Caco-2 (cell line): ENCODE measurements at regions of chr3 and their contacts with region 1.

Region 1: GRCh38 chr3:169966428-169966950 is at the start of gene SEC62:
- DNase-seq: peak; percentile 93 to 95
- H3K4me3 ChIP-seq: peak within 1 kb of the TSS; percentile 48
- H3K4me3 Mint-ChIP-seq: peak within 1 kb of the TSS; percentile 97
- H3K27ac Mint-ChIP-seq: peak within 1 kb of the TSS; percentile 99
- H3K4me1 ChIP-seq: peaks cover 7% of the 10 kb centered on the region
- H3K4me1 Mint-ChIP-seq: peaks cover 14% of the 10 kb centered on the region
- H3K27me3 ChIP-seq: no peaks in the 10 kb centered on the region
- H3K27me3 Mint-ChIP-seq: peaks cover 13% of the 10 kb centered on the region
- CTCF ChIP-seq: peak; percentile 19 to 62
- total RNA-seq, gene SEC62: 60.3 and 74.7 TPM in 2 replicates

Region 2: DNA sequence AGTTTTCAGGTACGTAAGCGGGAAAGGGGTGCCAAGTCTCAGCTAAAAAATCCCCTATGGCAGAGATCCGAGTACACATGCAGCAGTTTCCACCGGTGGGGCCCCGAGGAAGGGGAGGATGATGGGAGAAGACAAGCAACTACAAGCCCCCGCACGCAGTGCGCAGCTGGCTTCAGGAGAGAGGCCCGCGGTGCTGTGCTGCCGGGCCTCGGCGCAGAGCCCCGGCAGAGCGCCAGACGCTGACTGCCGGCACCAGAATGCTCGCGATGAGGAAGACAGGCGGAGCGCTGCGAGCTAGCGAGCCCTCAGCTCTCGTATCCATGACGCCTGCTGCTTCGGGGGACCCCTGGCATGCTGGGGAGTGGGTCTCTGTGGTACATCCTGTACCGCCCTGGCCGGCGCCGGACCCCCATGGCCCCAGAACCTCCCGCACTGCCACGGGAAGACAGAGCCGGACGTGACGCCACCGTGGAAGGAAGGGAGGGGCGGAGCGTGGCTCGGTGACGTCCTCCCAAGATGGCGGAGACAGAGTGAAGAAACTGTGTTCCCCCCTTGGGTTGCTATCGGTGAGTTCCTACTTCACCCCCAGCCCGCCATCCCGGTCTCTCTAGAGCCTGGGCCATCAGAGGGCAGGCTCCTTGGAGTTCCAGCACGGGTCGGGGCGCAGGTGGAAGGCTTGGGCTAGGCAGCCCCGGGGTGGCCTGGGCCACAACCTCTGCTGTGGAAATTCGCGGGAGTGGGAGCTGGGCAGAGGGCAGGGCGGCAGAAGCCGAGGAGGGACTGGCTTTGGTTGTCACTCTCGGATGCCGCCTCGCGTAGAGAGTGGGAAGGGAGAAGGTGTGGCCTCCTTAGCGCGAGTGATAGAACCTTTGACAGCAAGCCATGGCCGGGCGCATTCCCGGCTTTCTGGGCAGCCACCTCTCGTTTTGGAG is 193.3 kb before region 1 on chr3 and contains the start of gene MYNN:
- CTCF ChIA-PET with region 1: no interaction called
- POLR2A ChIA-PET with region 1: no interaction called
- intact Hi-C with region 1: loop called (anchors 2 kb)
- DNase-seq: peak; percentile 89 to 92
- H3K4me3 ChIP-seq: peak within 1 kb of the TSS; percentile 90
- H3K4me3 Mint-ChIP-seq: peak within 1 kb of the TSS; percentile 94
- H3K27ac Mint-ChIP-seq: peak within 1 kb of the TSS; percentile 98
- H3K4me1 ChIP-seq: no peaks in the 10 kb centered on the region
- H3K4me1 Mint-ChIP-seq: peaks cover 5% of the 10 kb centered on the region
- H3K27me3 ChIP-seq: no peaks in the 10 kb centered on the region
- H3K27me3 Mint-ChIP-seq: no peaks in the 10 kb centered on the region
- CTCF ChIP-seq: peak in 1 of 2 experiments; percentile 24
- total RNA-seq, gene MYNN: 9.8 and 10.6 TPM in 2 replicates

Region 3: DNA sequence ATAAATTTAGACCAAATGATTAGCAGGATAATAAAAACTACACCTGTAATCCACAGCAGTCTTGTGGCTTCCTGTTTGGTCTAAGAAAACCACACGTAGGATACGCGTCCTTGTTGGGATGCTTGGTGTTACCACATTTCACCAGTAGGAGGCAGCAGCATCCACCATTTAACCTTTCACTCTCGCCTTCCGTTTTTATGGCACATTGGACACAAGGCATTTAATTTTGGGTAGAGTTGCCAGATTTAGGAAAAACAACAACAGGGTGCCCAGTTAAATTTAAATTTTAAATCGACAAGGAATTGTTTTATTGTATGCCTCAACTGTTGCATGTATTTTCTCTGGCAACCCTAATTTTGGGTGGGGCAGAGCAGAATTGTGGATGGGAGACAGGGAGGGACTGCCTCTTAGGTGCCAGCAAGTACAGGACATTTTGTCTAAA is 103.0 kb before region 1 on chr3:
- CTCF ChIA-PET with region 1: no interaction called
- POLR2A ChIA-PET with region 1: no interaction called
- intact Hi-C with region 1: loop called (anchors 1 kb)
- DNase-seq: peak; percentile 57 to 71
- H3K4me3 ChIP-seq: no peak overlapping the region
- H3K4me3 Mint-ChIP-seq: no peak overlapping the region
- H3K27ac Mint-ChIP-seq: no peak overlapping the region
- H3K4me1 ChIP-seq: no peaks in the 10 kb centered on the region
- H3K4me1 Mint-ChIP-seq: no peaks in the 10 kb centered on the region
- H3K27me3 ChIP-seq: no peaks in the 10 kb centered on the region
- H3K27me3 Mint-ChIP-seq: no peaks in the 10 kb centered on the region
- CTCF ChIP-seq: peak; percentile 70 to 82

Region 4: DNA sequence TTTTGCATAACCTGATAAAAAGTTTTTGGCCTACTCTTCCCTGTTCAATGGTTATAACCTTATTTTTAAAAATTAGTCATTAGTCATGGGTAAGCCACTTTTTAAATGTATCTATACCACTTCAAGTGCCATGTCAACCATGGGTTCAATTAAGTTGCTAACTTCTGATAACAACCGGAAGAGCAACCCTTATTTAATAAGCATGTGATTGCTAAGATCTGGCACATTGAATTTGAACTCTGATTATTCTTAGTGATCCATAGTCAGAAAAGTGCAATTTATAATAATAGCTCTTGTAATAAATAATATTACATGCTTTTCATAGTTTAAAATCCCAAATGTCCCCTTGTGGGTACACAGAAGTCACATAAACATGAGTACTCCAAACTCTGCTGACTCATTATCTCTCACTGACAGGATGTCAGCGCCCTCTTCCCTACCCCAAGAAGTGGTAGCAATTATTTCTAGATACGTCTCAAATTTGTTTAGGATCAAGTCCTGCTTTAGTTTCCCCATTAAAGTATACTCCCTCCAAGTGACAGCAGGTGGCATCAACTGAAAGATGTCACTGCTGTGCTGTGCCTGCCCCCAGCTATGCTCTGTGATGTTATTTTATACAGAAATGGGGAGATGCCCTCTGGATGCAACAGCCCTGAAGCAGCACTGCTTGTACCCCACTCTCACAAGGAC is 36.5 kb before region 1 on chr3:
- CTCF ChIA-PET with region 1: no interaction called
- POLR2A ChIA-PET with region 1: no interaction called
- intact Hi-C with region 1: loop called (anchors 1 kb)
- DNase-seq: no peak
- H3K4me3 ChIP-seq: no peak overlapping the region
- H3K4me3 Mint-ChIP-seq: no peak overlapping the region
- H3K27ac Mint-ChIP-seq: no peak overlapping the region
- H3K4me1 ChIP-seq: no peaks in the 10 kb centered on the region
- H3K4me1 Mint-ChIP-seq: no peaks in the 10 kb centered on the region
- H3K27me3 ChIP-seq: no peaks in the 10 kb centered on the region
- H3K27me3 Mint-ChIP-seq: peaks cover 15% of the 10 kb centered on the region
- CTCF ChIP-seq: no peak

Region 5: GRCh38 chr3:170037463-170038433 is 71.3 kb after region 1 on chr3 and contains the start of gene GPR160:
- CTCF ChIA-PET with region 1: no interaction called
- POLR2A ChIA-PET with region 1: no interaction called
- intact Hi-C with region 1: loop called (anchors 2 kb)
- DNase-seq: peak; percentile 87 to 88
- H3K4me3 ChIP-seq: peak within 1 kb of the TSS; percentile 80
- H3K4me3 Mint-ChIP-seq: peak within 1 kb of the TSS; percentile 80
- H3K27ac Mint-ChIP-seq: peak within 1 kb of the TSS; percentile 73
- H3K4me1 ChIP-seq: 0 out of 2 replicates have a peak, but pooled peaks cover 4% of the 10 kb centered on the region
- H3K4me1 Mint-ChIP-seq: peaks cover 14% of the 10 kb centered on the region
- H3K27me3 ChIP-seq: no peaks in the 10 kb centered on the region
- H3K27me3 Mint-ChIP-seq: no peaks in the 10 kb centered on the region
- CTCF ChIP-seq: peak; percentile 70 to 83
- total RNA-seq, gene GPR160: 14.8 and 16.1 TPM in 2 replicates

Region 6: DNA sequence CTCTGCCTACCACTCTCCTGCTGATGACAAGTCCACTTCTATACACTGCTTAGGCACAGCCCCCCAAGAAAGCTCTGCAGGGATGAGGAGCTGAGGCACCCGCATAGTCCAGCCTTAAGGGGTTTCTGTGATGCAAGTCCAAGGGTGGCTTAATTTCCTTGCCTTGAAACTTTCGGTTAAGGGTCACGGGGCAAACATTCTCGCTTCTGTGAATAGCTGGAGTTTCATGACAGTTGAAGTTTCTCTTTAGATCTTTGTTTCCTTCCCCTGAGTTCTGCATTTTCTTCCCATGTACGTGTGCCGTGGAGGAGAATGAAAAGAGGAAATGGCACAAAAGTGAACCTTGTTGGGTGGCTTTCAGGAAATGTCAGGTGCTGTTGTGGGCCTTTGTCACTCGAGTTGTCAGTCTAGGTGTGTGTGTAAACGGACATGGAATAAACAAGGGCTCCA is 78.3 kb after region 1 on chr3:
- CTCF ChIA-PET with region 1: no interaction called
- POLR2A ChIA-PET with region 1: interaction called, 15 read pairs
- intact Hi-C with region 1: no loop called
- DNase-seq: no peak
- H3K4me3 ChIP-seq: no peak overlapping the region
- H3K4me3 Mint-ChIP-seq: no peak overlapping the region
- H3K27ac Mint-ChIP-seq: no peak overlapping the region
- H3K4me1 ChIP-seq: peaks cover 11% of the 10 kb centered on the region
- H3K4me1 Mint-ChIP-seq: peaks cover 18% of the 10 kb centered on the region
- H3K27me3 ChIP-seq: no peaks in the 10 kb centered on the region
- H3K27me3 Mint-ChIP-seq: no peaks in the 10 kb centered on the region
- CTCF ChIP-seq: no peak